ENCODE measurements at regions of chr20 and their contacts with region 1.

Region 1: GRCh38 chr20:35490736-35491181 is 35.4 kb downstream of the CEP250 start:
- DNase-seq: peak; percentile 51
- ATAC-seq: peak; percentile 99
- H3K4me3 ChIP-seq: peak overlapping the region; percentile 100
- H3K27ac ChIP-seq: peak overlapping the region; percentile 96
- H3K4me1 ChIP-seq: peaks cover 8% of the 10 kb centered on the region; the same call in 1 of the 2 replicates
- H3K27me3 ChIP-seq: no peaks in the 10 kb centered on the region
- CTCF ChIP-seq: no peak
- EP300 ChIP-seq: no peak
- POLR2A ChIP-seq: peak; percentile 95
- RAD21 ChIP-seq: no peak

Region 2: GRCh38 chr20:35329435-35330139 is 161.2 kb before region 1 on chr20:
- CTCF ChIA-PET with region 1: no interaction called
- POLR2A ChIA-PET with region 1: no interaction called
- RAD21 ChIA-PET with region 1: no interaction called
- SMC1A ChIA-PET with region 1: no interaction called
- in situ Hi-C with region 1: no loop called
- intact Hi-C with region 1: no loop called
- DNase-seq: no peak
- ATAC-seq: peak; percentile 94
- H3K4me3 ChIP-seq: no peak overlapping the region
- H3K27ac ChIP-seq: no peak overlapping the region
- H3K4me1 ChIP-seq: no peaks in the 10 kb centered on the region
- H3K27me3 ChIP-seq: no peaks in the 10 kb centered on the region
- CTCF ChIP-seq: peak; percentile 51 to 66 (median 64)
- EP300 ChIP-seq: no peak
- POLR2A ChIP-seq: no peak
- RAD21 ChIP-seq: peak; percentile 43; the same call in 1 of the 2 replicates

Region 3: GRCh38 chr20:35502352-35502751 is 11.6 kb after region 1 on chr20:
- CTCF ChIA-PET with region 1: interaction called, 6 read pairs
- POLR2A ChIA-PET with region 1: interaction called, 6 read pairs
- RAD21 ChIA-PET with region 1: no interaction called
- SMC1A ChIA-PET with region 1: interaction called, 14 read pairs
- in situ Hi-C with region 1: no loop called
- intact Hi-C with region 1: no loop called
- DNase-seq: peak; percentile 23
- ATAC-seq: peak; percentile 87
- H3K4me3 ChIP-seq: no peak overlapping the region
- H3K27ac ChIP-seq: peak overlapping the region; percentile 31; the same call in 1 of the 2 replicates
- H3K4me1 ChIP-seq: peaks cover 29% of the 10 kb centered on the region
- H3K27me3 ChIP-seq: no peaks in the 10 kb centered on the region
- CTCF ChIP-seq: no peak
- EP300 ChIP-seq: no peak
- POLR2A ChIP-seq: no peak
- RAD21 ChIP-seq: no peak

Region 4: DNA sequence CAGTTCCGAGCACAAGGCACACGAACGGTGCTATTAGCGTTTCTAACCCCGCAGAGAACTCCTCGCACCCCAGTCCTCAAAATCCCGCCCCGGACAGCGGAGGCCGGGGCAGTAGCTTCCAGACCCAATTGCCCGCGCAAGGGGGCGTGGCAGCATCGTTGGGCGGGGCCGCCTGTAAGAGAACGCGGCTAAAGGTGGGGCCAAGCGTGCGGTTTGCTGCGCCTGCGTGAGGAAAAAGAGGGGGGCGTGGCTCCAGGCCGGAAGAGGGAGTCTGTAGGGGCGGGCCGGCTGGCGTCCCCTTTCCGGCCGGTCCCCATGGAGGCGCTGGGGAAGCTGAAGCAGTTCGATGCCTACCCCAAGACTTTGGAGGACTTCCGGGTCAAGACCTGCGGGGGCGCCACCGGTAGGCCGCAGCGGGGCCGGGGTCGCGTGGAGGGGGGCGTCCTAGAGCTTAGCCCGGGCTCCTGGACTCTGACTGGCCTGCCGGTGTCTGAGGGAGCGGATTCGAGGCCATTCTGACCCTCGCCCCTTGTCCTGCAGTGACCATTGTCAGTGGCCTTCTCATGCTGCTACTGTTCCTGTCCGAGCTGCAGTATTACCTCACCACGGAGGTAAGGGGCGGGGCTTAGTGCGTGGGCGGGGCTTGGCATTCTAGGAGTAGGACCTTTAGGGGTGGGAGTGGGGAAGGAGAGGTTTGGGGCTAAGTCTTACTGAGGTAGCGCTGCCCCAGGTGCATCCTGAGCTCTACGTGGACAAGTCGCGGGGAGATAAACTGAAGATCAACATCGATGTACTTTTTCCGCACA is 51.2 kb after region 1 on chr20 and contains the start of gene ERGIC3:
- CTCF ChIA-PET with region 1: interaction called, 4 read pairs
- POLR2A ChIA-PET with region 1: interaction called, 16 read pairs
- RAD21 ChIA-PET with region 1: no interaction called
- SMC1A ChIA-PET with region 1: interaction called, 9 read pairs
- in situ Hi-C with region 1: no loop called
- intact Hi-C with region 1: no loop called
- DNase-seq: peak; percentile 77
- ATAC-seq: peak; percentile 95
- H3K4me3 ChIP-seq: peak within 1 kb of the TSS; percentile 92
- H3K27ac ChIP-seq: peak within 1 kb of the TSS; percentile 71; the same call in 1 of the 2 replicates
- H3K4me1 ChIP-seq: peaks cover 12% of the 10 kb centered on the region
- H3K27me3 ChIP-seq: no peaks in the 10 kb centered on the region
- CTCF ChIP-seq: no peak
- EP300 ChIP-seq: no peak
- POLR2A ChIP-seq: peak; percentile 78
- RAD21 ChIP-seq: no peak
- polyA plus RNA-seq, gene ERGIC3: 159 to 205 TPM

Measured in GM12878 (cell line).